HepG2 (cell line): ENCODE measurements at regions of chr9 and their contacts with region 1.

Region 1: GRCh38 chr9:20622330-20623020 is at the start of gene MLLT3:
- DNase-seq: peak; percentile 84
- ATAC-seq: peak; percentile 91
- H3K4me3 ChIP-seq: peak within 1 kb of the TSS; percentile 81 to 88 (median 85)
- H3K27ac ChIP-seq: peak within 1 kb of the TSS; percentile 60
- H3K4me1 ChIP-seq: peaks cover 26% of the 10 kb centered on the region
- H3K27me3 ChIP-seq: peaks cover 0 to 24% of the 10 kb centered on the region in 2 experiments; a peak in 2 of 5 replicates
- CTCF ChIP-seq: peak; percentile 25
- EP300 ChIP-seq: no peak
- POLR2A ChIP-seq: no peak
- RAD21 ChIP-seq: no peak
- total RNA-seq, gene MLLT3: 12.3 and 18.5 TPM in 2 replicates

Region 2: DNA sequence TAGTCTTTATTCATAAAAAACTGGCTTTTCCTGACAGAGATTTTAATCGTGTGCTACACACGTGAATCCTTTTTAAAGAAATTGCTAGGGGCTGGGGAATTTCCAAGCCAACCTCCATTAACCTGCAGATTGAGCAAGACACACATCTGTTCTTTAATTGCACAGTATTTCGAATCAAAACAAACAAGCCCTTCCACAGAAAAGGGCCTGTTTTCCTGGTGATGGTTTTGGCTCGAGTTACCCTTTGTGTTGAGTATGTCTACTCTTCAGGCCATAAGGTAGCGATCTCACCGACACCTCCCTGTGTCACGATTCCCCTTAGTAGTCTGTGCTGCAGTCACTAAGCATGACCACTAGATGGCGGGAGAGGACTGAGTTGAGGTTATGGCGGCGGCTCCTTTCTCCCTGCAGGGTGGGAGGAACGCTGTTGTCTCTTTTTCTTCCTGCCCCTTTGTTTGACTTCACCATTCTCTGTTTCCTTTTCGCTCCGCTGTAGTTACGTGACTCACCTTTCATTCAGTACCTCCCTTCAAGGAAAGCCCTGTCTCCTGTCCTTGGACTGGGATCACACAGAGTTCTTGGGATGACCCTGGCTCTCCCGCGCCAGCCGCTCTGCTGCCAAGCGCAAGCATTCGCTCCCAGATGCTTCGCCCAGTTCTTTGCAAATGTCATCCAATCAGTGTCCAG is 696.5 kb before region 1 on chr9:
- CTCF ChIA-PET with region 1: no interaction called
- POLR2A ChIA-PET with region 1: no interaction called
- in situ Hi-C with region 1: loop called (anchors 25 kb)
- intact Hi-C with region 1: loop called (anchors 5 kb)
- DNase-seq: peak; percentile 55
- ATAC-seq: peak; percentile 98
- H3K4me3 ChIP-seq: no peak overlapping the region
- H3K27ac ChIP-seq: no peak overlapping the region
- H3K4me1 ChIP-seq: no peaks in the 10 kb centered on the region
- H3K27me3 ChIP-seq: peaks cover 1 to 15% of the 10 kb centered on the region in 2 experiments; a peak in 3 of 5 replicates
- CTCF ChIP-seq: peak; percentile 96
- EP300 ChIP-seq: no peak
- POLR2A ChIP-seq: no peak
- RAD21 ChIP-seq: peak; percentile 86

Region 3: DNA sequence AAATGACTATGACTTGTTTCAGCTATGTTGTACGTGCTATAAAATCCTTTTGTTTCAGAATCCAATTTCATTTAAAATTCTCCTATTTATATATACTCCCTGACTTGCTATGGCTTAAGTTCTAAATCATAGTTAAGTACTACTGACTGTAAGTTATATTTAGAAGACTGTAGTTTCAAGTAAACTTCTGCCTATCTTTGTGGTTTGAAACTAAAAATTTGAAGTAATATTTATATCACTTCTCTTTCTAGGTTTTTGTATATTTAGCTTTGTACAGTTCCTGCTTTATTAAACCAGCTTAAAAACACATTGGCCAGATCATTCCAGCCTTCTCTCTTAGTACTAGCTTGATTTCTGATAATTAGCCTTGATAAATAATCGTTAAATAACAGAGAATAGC is 196.5 kb before region 1 on chr9:
- CTCF ChIA-PET with region 1: no interaction called
- POLR2A ChIA-PET with region 1: no interaction called
- in situ Hi-C with region 1: no loop called
- intact Hi-C with region 1: loop called (anchors 5 kb)
- DNase-seq: no peak
- ATAC-seq: no peak
- H3K4me3 ChIP-seq: no peak overlapping the region
- H3K27ac ChIP-seq: no peak overlapping the region
- H3K4me1 ChIP-seq: no peaks in the 10 kb centered on the region
- H3K27me3 ChIP-seq: no peaks in the 10 kb centered on the region
- CTCF ChIP-seq: no peak
- EP300 ChIP-seq: no peak
- POLR2A ChIP-seq: no peak
- RAD21 ChIP-seq: no peak

Region 4: GRCh38 chr9:20552874-20553575 is 69.5 kb before region 1 on chr9:
- CTCF ChIA-PET with region 1: no interaction called
- POLR2A ChIA-PET with region 1: no interaction called
- in situ Hi-C with region 1: no loop called
- intact Hi-C with region 1: loop called (anchors 5 kb)
- DNase-seq: peak; percentile 9
- ATAC-seq: no peak
- H3K4me3 ChIP-seq: no peak overlapping the region
- H3K27ac ChIP-seq: no peak overlapping the region
- H3K4me1 ChIP-seq: peaks cover 32% of the 10 kb centered on the region
- H3K27me3 ChIP-seq: no peaks in the 10 kb centered on the region
- CTCF ChIP-seq: no peak
- EP300 ChIP-seq: no peak
- POLR2A ChIP-seq: no peak
- RAD21 ChIP-seq: no peak

Region 5: GRCh38 chr9:20684035-20684872 is 61.8 kb after region 1 on chr9 and contains the start of gene FOCAD:
- CTCF ChIA-PET with region 1: no interaction called
- POLR2A ChIA-PET with region 1: interaction called, 30 read pairs
- in situ Hi-C with region 1: no loop called
- intact Hi-C with region 1: loop called (anchors 1 kb)
- DNase-seq: peak; percentile 89
- ATAC-seq: peak; percentile 99
- H3K4me3 ChIP-seq: peak within 1 kb of the TSS; percentile 65 to 89 (median 88)
- H3K27ac ChIP-seq: peak within 1 kb of the TSS; percentile 91
- H3K4me1 ChIP-seq: peaks cover 54% of the 10 kb centered on the region
- H3K27me3 ChIP-seq: no peaks in the 10 kb centered on the region; a peak in 1 of 5 replicates
- CTCF ChIP-seq: no peak
- EP300 ChIP-seq: 0 out of 4 replicates have a peak, but pooled peaks of 1 of the 2 experiments have one; percentile 46
- POLR2A ChIP-seq: peak; percentile 94 to 98
- RAD21 ChIP-seq: peak; percentile 50; the same call in 1 of the 2 replicates
- total RNA-seq, gene FOCAD: 31.1 and 52.7 TPM in 2 replicates

Region 6: DNA sequence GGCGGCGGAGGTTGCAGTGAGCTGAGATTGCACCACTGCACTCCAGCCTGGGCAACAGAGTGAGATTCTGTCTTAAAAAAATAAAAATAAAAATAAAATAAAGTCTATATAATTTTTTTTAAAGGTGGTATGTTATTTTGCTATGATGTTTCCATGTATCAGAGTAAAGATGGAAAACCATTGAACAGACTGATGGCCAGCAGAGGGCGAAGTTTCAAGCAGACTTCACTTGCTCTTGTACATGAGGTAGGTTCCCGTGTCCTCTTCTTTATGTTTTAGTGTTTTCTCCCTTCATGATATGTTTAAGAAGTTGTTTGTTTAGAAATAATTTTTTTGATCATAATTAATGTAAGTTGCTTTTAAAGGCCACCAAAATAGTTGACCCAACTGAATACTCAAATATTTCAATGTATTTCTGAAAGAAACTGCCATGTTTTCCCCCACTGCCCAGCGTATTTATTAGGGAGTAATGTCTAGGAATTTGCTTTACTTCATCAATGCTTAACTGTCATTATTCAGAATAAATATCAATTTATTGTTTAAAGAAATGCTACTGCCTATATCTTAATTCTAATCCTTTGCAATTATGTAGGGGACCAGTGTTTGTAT is 262.6 kb after region 1 on chr9:
- CTCF ChIA-PET with region 1: interaction called, 3 read pairs
- POLR2A ChIA-PET with region 1: no interaction called
- in situ Hi-C with region 1: no loop called
- intact Hi-C with region 1: loop called (anchors 1 kb)
- DNase-seq: peak; percentile 44
- ATAC-seq: peak; percentile 69
- H3K4me3 ChIP-seq: no peak overlapping the region
- H3K27ac ChIP-seq: no peak overlapping the region
- H3K4me1 ChIP-seq: no peaks in the 10 kb centered on the region
- H3K27me3 ChIP-seq: no peaks in the 10 kb centered on the region
- CTCF ChIP-seq: peak; percentile 48
- EP300 ChIP-seq: no peak
- POLR2A ChIP-seq: no peak
- RAD21 ChIP-seq: no peak

Region 7: DNA sequence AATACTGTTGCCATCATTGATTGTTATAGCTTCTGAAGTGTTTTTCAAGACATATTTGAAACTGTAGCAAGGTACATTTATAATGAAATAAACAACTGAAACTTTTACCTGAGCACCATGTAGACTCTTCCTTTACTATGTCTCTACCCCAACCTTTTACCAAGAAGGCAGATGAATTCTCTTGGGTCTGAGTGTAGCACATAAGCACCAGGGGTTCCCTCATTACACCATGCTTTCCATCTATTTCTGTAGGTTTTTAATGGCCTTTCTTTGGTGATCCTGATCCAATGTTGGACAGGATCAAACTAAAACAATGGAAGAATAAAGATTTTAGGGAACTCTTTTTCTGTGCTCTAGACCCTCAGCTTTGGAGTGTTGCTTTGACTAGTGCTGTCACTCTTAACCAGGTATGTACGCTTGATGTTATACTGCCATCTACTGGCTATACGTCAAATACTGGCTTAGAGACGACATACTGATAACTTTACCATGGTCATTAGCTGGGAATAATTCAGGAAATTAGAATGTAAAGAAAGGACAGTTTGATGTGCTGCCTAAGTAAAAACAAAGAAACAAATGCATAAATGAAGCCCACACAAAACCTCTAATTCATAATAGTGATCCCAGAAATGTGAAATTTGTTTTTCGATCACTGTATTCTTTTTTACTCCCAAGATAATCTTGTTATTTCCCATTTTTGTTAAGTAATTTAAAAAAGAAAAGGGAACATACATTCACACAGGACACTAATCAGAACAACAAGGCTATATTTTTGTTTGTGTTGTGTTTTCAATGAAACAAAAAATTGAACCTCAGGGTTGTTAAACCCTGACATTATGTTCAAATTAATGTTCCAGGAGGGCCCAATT is 488.5 kb after region 1 on chr9:
- CTCF ChIA-PET with region 1: interaction called, 3 read pairs
- POLR2A ChIA-PET with region 1: no interaction called
- in situ Hi-C with region 1: loop called (anchors 25 kb)
- intact Hi-C with region 1: loop called (anchors 1 kb)
- DNase-seq: peak; percentile 61
- ATAC-seq: peak; percentile 98
- H3K4me3 ChIP-seq: no peak overlapping the region
- H3K27ac ChIP-seq: no peak overlapping the region
- H3K4me1 ChIP-seq: no peaks in the 10 kb centered on the region
- H3K27me3 ChIP-seq: no peaks in the 10 kb centered on the region
- CTCF ChIP-seq: peak; percentile 85
- EP300 ChIP-seq: no peak
- POLR2A ChIP-seq: no peak
- RAD21 ChIP-seq: no peak